GM12878 (cell line): ENCODE measurements at regions of chr6 and their contacts with region 1.

Region 1: GRCh38 chr6:25130518-25130917 is 148.7 kb upstream of the CARMIL1 start:
- DNase-seq: no peak
- ATAC-seq: no peak
- H3K4me3 ChIP-seq: no peak overlapping the region
- H3K27ac ChIP-seq: no peak overlapping the region
- H3K4me1 ChIP-seq: no peaks in the 10 kb centered on the region
- H3K27me3 ChIP-seq: no peaks in the 10 kb centered on the region
- CTCF ChIP-seq: no peak
- EP300 ChIP-seq: no peak
- POLR2A ChIP-seq: no peak
- RAD21 ChIP-seq: no peak

Region 2: DNA sequence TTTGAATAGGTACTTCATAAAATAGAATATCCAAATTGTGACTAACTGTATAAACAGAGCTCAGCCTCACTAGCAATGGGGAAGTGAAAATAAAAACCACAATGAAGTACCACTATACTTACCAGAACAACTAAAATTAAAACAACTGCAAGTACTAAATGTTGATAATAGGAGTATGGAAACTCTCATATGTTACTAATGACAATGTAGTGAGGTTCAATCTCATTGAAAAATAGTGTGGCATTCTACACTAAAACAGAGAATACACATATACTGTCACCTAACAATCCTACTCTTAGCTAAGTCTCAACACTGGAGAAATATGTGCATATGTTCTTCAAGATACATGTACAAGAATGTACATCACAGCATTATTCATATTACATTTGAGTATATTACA is 16.7 kb after region 1 on chr6:
- CTCF ChIA-PET with region 1: interaction called, 5 read pairs
- POLR2A ChIA-PET with region 1: interaction called, 4 read pairs
- RAD21 ChIA-PET with region 1: interaction called, 3 read pairs
- SMC1A ChIA-PET with region 1: interaction called, 12 read pairs
- in situ Hi-C with region 1: no loop called
- intact Hi-C with region 1: no loop called
- DNase-seq: peak; percentile 46
- ATAC-seq: peak; percentile 99
- H3K4me3 ChIP-seq: no peak overlapping the region
- H3K27ac ChIP-seq: no peak overlapping the region
- H3K4me1 ChIP-seq: peaks cover 12% of the 10 kb centered on the region; the same call in 1 of the 2 replicates
- H3K27me3 ChIP-seq: no peaks in the 10 kb centered on the region
- CTCF ChIP-seq: no peak
- EP300 ChIP-seq: peak; percentile 33 to 37; a peak in 1 of 4 replicates
- POLR2A ChIP-seq: no peak
- RAD21 ChIP-seq: no peak